Mammary epithelial cell (primary cell): ENCODE measurements at regions of chr2 and their contacts with region 1.

Region 1: DNA sequence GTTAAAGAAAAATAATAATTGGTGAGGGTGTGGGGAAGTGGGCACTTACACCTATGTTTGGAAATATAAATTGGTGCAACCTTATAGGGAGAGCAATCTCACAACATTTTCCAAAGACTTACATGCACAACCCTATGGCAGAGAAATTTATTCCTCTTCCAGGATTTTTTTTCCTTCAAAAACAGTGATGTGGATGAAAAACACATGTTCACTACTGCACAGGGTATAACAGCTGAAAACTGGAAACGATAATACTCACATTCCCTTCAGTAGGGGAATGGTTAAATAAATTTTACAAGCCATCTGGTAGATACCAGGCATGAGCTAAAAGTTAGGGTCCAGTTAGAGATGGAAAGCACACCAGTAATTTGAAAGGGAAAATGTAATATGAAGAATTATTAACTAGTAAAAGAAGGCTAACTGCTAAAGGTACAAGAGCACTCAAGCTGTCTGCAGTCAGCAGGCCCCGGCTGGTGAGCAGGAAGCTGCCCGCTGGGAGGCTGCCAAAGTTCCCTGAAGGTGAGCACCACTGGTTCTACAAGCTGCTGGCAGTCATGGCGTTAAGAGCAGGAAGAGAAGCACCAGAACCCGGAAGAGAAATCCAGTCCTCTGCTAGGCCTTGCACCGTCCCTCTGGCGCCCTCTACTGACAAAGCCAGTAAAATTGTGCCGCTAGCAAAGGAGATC is 28.4 kb upstream of the CASP8 start:
- DNase-seq: peak; percentile 90
- H3K4me3 ChIP-seq: no peak overlapping the region
- H3K27ac ChIP-seq: no peak overlapping the region
- H3K4me1 ChIP-seq: peaks cover 25% of the 10 kb centered on the region
- H3K27me3 ChIP-seq: no peaks in the 10 kb centered on the region
- CTCF ChIP-seq: peak; percentile 96

Region 2: GRCh38 chr2:200888704-200889625 is 343.0 kb before region 1 on chr2 and contains the starts of genes NIF3L1 and PPIL3:
- CTCF ChIA-PET with region 1: interaction called, 3 read pairs
- dilution Hi-C with region 1: no loop called
- in situ Hi-C with region 1: no loop called
- intact Hi-C with region 1: loop called (anchors 5 kb)
- DNase-seq: peak; percentile 98
- H3K4me3 ChIP-seq: peak within 1 kb of the TSS; percentile 77 to 97 (median 85)
- H3K27ac ChIP-seq: peak within 1 kb of the TSS; percentile 92
- H3K4me1 ChIP-seq: peaks cover 5% of the 10 kb centered on the region
- H3K27me3 ChIP-seq: no peaks in the 10 kb centered on the region
- CTCF ChIP-seq: no peak
- total RNA-seq, gene NIF3L1: 18.0 to 23.2 TPM
- total RNA-seq, gene PPIL3: 18.5 to 45.1 TPM

Region 3: DNA sequence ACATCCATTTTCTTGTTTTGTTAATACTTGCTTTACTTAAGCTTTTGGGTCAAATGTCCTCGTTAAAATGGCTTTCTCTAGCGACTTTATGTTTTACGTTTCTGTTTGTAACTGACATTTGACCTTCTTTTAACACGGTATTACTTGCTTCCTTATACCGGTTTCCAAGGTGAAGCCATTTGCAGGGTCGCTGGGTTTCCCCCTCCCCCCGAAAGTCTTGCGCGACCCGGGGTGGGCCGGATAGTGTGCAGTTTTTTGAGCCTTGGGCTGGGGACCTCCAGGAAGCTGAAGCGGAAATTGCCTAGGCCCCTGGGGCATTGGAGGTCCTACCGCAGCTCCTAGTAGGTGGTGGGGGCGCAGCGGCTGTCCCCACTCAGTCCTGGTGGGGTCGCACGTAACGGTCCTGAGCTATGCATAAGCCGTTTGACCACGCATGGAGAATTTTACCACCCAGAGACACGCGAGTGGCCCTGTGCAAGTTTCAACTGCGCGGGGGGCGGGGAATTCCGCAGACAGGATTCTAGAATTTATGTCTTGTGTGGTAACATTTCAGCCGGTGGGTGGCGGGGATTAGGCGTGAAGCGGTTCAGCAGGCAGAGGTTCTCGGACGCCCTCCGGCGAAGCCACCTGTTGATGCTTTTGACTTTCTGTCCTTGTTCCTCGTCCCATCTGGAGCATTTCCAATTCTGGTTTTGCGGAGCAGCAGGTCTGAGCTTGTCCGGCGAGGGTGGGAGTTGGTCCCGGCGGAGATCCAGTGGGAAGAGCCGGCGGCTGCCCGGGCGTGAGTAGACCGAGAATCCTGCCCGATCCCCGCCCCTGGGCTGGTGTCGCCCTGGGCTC is 113.6 kb before region 1 on chr2:
- CTCF ChIA-PET with region 1: no interaction called
- dilution Hi-C with region 1: no loop called
- in situ Hi-C with region 1: no loop called
- intact Hi-C with region 1: loop called (anchors 1 kb)
- DNase-seq: peak; percentile 98
- H3K4me3 ChIP-seq: peak overlapping the region; percentile 70 to 77 (median 74)
- H3K27ac ChIP-seq: peak overlapping the region; percentile 90
- H3K4me1 ChIP-seq: peaks cover 34% of the 10 kb centered on the region
- H3K27me3 ChIP-seq: no peaks in the 10 kb centered on the region
- CTCF ChIP-seq: peak; percentile 18 to 64

Region 4: GRCh38 chr2:201363857-201364560 is 132.1 kb after region 1 on chr2:
- CTCF ChIA-PET with region 1: interaction called, 4 read pairs
- dilution Hi-C with region 1: no loop called
- in situ Hi-C with region 1: loop called in 1 of 2 experiments (anchors 5 kb)
- intact Hi-C with region 1: loop called (anchors 1 kb)
- DNase-seq: peak; percentile 70
- H3K4me3 ChIP-seq: no peak overlapping the region
- H3K27ac ChIP-seq: no peak overlapping the region
- H3K4me1 ChIP-seq: peaks cover 5% of the 10 kb centered on the region
- H3K27me3 ChIP-seq: no peaks in the 10 kb centered on the region
- CTCF ChIP-seq: peak; percentile 84 to 87

Region 5: GRCh38 chr2:201642579-201643215 is 410.8 kb after region 1 on chr2:
- CTCF ChIA-PET with region 1: no interaction called
- dilution Hi-C with region 1: no loop called
- in situ Hi-C with region 1: no loop called
- intact Hi-C with region 1: loop called (anchors 10 kb)
- DNase-seq: peak; percentile 81
- H3K4me3 ChIP-seq: peak overlapping the region; percentile 65 to 97 (median 69)
- H3K27ac ChIP-seq: peak overlapping the region; percentile 74
- H3K4me1 ChIP-seq: peaks cover 19% of the 10 kb centered on the region
- H3K27me3 ChIP-seq: no peaks in the 10 kb centered on the region
- CTCF ChIP-seq: no peak